ENCODE measurements at regions of chr11 and their contacts with region 1.

Region 1: DNA sequence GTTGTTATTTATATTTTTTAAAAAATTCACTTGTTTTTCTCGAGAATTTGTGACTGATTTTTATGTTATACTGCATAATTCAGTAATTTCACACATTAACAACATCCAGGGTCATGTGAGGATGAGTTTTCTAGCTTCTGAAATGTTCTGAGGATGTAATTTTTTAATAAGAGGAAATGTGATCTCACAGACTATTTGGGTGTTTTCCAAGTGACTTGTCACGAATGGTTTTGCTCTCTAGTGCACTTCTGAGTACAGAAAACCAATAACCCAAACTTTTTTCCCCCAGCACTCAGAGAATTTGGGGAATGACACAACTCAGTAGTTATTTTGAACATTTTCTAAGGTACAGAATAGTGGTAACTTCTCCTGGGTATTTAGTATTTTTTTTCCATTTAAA is 821.1 kb upstream of the ARHGAP42 start:
- DNase-seq: no peak
- ATAC-seq: no peak
- H3K4me3 ChIP-seq: no peak overlapping the region
- H3K27ac ChIP-seq: no peak overlapping the region
- H3K4me1 ChIP-seq: no peaks in the 10 kb centered on the region
- H3K27me3 ChIP-seq: no peaks in the 10 kb centered on the region
- CTCF ChIP-seq: no peak

Region 2: DNA sequence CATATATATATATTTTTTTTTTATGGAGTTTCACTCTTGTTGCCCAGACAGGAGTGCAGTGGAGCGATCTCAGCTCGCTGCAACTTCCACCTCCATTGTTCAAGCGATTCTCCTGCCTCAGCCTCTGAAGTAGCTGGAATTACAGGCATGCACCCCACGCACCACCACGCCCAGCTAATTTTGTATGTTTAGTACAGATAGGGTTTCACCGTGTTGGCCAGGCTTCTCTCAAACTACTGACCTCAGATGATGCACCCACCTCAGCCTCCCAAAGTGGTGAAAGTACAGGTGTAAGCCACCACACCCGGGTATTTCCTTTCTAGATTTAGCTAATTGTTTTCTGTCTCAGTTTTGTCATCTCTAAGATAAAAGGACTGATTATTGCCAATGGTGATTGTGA is 24.1 kb before region 1 on chr11:
- intact Hi-C with region 1: no loop called
- DNase-seq: no peak
- ATAC-seq: no peak
- H3K4me3 ChIP-seq: no peak overlapping the region
- H3K27ac ChIP-seq: no peak overlapping the region
- H3K4me1 ChIP-seq: no peaks in the 10 kb centered on the region
- H3K27me3 ChIP-seq: peaks cover 0 to 1% (median 0%) of the 10 kb centered on the region in 3 donors
- CTCF ChIP-seq: no peak

Region 3: DNA sequence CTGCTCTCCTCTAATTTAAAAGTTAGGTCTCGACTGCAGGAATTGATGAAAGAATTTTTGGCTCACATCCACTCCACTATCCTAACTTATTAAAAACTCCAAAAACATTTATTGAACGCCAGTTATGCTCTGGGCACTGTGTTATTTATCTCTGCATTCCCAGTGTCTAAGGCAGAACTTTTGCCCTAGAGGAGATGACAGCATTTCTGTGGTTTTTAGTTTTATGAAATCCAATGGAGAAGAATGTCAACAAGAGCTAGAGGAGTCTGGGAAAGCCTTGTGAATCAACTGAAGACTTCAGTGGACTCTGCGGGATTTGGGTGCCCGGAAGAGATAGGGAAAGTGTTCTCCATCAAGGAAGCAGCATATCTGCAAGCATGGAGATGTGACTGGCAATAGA is 1480.6 kb after region 1 on chr11:
- intact Hi-C with region 1: loop called in 1 of 2 experiments (anchors 10 kb)
- DNase-seq: no peak
- ATAC-seq: no peak
- H3K4me3 ChIP-seq: no peak overlapping the region
- H3K27ac ChIP-seq: no peak overlapping the region
- H3K4me1 ChIP-seq: no peaks in the 10 kb centered on the region
- H3K27me3 ChIP-seq: no peaks in the 10 kb centered on the region
- CTCF ChIP-seq: no peak

Measured in psoas muscle (tissue), 8 donors.